ENCODE measurements at regions of chr18 and their contacts with region 1.

Region 1: DNA sequence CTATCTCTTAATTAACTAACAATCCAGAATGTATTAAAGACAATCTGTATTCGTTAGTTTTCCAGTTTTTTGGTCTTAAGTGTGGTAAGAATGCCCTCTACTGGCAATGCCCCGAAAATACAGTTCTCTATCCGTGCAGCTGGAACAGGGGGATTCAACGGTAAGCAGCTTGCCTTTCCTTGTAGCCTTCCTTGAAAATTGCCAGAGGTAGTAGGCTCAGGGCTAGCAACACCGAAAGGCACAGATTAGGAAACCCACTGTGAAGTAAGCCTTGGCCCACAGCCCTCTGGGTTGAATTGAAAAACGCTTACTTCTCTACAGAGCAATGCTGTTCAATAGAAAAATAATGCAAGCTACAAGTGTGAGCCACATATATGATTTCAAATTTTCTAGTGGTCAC is 17.1 kb upstream of the VPS4B start:
- H3K4me3 Mint-ChIP-seq: no peak overlapping the region
- H3K27ac Mint-ChIP-seq: no peak overlapping the region
- H3K4me1 Mint-ChIP-seq: peaks cover 41% of the 10 kb centered on the region
- H3K27me3 Mint-ChIP-seq: no peaks in the 10 kb centered on the region

Region 2: DNA sequence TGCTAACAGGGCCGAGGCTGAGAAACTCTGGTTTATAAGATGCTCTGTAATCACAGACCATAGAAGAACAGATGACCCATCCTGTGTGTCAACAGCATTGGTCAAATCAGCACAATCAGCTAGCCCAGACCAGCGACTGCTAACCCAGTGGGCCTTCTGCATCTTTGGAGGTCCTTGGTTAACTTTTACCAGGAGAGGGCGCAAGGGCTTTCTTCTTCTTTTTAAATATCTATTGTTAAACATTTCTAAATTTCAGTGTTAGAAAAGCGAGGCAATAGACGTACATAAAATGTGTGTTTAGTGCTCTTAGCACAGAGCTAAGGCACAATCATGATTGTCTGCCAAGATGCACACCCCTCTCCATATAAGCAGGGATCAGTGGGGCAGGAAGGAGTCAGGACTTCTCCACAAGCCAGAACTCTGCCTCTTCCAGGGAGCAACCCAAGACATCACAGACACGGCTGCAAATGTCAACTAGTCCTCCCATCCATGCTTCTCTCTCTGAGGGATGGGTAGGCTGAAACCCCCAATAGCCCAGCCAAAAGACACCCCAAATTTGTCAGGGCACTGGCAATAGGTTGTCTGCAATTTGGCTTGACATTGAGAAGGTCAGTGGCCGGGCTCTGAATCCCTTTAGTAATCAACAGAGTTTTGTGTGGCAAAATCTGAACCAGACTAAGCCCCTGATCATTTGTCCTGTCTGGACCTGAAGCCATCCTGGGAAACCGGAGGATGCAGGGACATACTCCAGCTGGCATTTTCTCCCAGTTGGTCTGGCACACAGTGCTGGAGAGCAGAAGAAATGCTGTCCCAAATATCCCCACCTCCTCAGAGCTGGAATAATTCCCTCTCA is 308.0 kb before region 1 on chr18:
- intact Hi-C with region 1: loop called (anchors 5 kb)
- H3K4me3 Mint-ChIP-seq: no peak overlapping the region
- H3K27ac Mint-ChIP-seq: no peak overlapping the region
- H3K4me1 Mint-ChIP-seq: peaks cover 13% of the 10 kb centered on the region
- H3K27me3 Mint-ChIP-seq: peaks cover 4% of the 10 kb centered on the region

Region 3: DNA sequence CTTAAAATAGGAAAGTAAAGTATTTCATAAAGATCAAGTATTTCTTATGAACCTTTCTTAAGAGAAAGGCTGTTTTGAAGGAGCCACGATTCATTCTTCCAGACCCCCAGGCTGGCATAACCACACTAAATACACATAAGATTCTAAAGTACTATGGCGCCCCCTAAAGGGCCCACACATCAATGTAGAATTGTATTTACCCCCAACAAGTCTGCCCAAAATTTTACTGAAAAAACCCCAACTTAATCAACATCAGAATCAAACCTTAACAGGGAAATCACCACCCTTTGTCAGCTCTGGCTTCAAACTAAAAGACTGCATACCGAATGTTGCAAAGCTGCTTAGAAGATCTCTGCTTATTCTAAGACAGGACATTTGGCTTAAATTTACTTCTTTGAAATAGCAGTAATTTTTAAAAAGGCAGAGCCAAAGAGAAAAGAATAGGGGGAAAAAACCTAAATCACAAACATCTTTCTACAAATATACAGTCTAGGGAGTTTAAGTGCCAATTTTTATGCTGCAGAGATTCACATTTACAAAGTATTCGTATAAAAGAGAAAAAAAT is 99.3 kb before region 1 on chr18:
- intact Hi-C with region 1: loop called (anchors 1 kb)
- H3K4me3 Mint-ChIP-seq: no peak overlapping the region
- H3K27ac Mint-ChIP-seq: no peak overlapping the region
- H3K4me1 Mint-ChIP-seq: peaks cover 2% of the 10 kb centered on the region
- H3K27me3 Mint-ChIP-seq: no peaks in the 10 kb centered on the region

Region 4: GRCh38 chr18:63422087-63422809 is 17.1 kb before region 1 on chr18 and contains the start of gene VPS4B:
- intact Hi-C with region 1: loop called (anchors 2 kb)
- H3K4me3 Mint-ChIP-seq: peak within 1 kb of the TSS; percentile 95
- H3K27ac Mint-ChIP-seq: peak within 1 kb of the TSS; percentile 98
- H3K4me1 Mint-ChIP-seq: peaks cover 21% of the 10 kb centered on the region
- H3K27me3 Mint-ChIP-seq: no peaks in the 10 kb centered on the region

Region 5: DNA sequence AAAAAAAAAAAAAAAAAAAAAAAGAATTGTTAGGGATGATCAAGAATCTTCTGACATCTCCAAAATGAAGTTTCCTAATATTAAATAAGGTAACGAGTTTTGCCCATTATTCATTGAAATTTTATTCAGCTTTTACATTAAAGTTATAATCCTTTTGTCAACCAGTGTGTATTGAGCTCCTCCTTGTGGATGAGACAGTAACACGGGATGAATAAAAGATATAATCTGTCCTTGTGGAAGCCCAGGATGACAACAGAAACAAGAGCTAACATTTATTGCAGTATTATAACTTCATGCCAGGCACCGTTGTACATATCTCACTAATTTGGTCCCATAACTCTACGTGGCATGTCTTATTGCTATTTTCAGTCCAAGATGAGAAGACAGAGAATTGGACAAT is 302.4 kb after region 1 on chr18:
- intact Hi-C with region 1: no loop called
- H3K4me3 Mint-ChIP-seq: no peak overlapping the region
- H3K27ac Mint-ChIP-seq: no peak overlapping the region
- H3K4me1 Mint-ChIP-seq: no peaks in the 10 kb centered on the region
- H3K27me3 Mint-ChIP-seq: peaks cover 4% of the 10 kb centered on the region